HEK293 (cell line): ENCODE measurements at regions of chr5 and their contacts with region 1.

Region 1: DNA sequence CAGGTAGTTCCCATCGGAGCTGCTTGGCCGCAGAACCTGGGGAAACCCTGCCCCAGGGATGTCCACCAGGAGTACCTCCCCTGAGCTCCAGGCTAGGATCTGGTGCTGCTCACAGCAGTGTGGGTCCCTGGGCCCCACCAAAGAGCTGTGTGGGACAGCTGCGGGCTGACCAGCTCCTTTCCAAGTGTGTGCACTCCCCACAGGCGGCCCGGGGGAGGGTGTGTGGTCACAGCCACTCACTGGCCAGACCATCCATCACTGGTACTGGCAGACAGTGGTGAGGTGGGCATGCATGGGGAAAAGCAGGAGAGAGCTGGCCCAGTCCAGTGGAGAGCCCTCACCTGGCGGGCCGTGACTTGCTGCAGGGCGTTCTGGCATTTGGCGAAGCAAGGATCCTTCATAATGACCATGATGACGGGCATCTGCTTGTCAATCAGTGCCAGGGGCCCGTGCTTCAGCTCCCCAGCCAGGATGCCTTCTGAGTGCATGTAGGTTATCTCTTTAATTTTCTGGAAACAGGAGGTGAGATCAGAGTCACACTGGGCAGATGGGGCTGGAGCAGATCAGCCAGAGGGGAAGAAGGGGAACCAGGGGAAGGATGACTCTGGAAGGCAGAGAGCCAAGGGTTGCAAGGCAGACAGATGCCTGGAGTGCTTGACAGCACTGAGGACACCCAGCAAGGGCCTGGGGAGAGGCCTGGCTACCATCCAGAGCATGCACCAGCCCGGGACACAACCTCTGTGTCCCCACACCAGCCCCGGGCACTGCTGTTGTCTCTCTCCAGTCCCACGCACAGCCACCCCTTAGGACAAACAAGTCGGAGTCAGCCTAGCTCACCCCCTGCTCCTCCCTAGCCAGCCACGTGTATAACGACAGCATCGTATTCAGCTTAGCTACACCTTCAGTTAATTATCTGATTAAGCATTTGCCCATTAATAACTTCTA is 12.8 kb upstream of the MAPK9 start:
- H3K4me3 ChIP-seq: no peak overlapping the region
- H3K27ac ChIP-seq: no peak overlapping the region
- H3K4me1 ChIP-seq: no peaks in the 10 kb centered on the region
- CTCF ChIP-seq: no peak

Region 2: GRCh38 chr5:180315762-180316212 is 11.1 kb after region 1 on chr5:
- CTCF ChIA-PET with region 1: interaction called, 17 read pairs
- POLR2A ChIA-PET with region 1: no interaction called
- H3K4me3 ChIP-seq: no peak overlapping the region
- H3K27ac ChIP-seq: no peak overlapping the region
- H3K4me1 ChIP-seq: no peaks in the 10 kb centered on the region
- CTCF ChIP-seq: peak; percentile 55; the same call in 1 of the 2 replicates

Region 3: DNA sequence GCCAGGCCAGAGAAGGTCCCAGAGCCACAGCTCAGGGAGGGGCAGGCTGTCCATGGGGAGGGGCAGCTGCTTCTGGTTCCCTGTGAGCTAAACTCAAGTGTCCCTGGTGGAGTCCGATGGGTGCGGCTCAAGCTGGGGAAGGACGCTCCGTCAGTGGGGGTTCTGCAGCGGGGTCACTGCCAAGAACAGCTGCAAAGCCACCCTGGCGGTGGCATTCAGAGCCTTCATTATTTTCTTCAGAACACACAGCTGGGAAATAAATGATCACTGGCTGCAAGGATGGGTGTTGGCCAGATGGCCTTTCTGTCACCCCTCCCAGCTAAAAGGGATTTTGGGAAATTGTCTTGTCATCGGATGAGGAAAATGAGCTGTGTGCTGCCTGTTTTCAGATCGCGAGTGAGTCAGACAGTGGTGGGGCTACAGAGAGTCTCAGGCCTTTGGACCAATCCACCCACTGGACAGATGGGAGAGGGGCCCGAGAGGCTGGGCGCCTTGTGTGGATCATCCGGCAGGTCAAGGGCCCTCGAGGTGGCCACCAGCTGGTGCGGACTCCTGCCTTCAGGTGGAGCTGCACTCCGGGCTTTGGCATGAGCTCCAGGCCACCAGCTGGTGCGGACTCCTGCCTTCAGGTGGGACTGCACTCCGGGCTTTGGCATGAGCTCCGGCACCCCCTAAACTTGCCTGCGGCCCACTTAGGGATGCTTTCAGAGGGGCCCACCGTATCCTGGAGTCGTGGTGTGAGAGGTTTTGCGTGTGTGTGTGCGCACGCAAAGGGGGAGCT is 66.3 kb after region 1 on chr5:
- CTCF ChIA-PET with region 1: no interaction called
- POLR2A ChIA-PET with region 1: no interaction called
- H3K4me3 ChIP-seq: no peak overlapping the region
- H3K27ac ChIP-seq: no peak overlapping the region
- H3K4me1 ChIP-seq: no peaks in the 10 kb centered on the region
- CTCF ChIP-seq: no peak